Kidney (tissue), 22 donors: ENCODE measurements at regions of chr17 and their contacts with region 1.

Region 1: DNA sequence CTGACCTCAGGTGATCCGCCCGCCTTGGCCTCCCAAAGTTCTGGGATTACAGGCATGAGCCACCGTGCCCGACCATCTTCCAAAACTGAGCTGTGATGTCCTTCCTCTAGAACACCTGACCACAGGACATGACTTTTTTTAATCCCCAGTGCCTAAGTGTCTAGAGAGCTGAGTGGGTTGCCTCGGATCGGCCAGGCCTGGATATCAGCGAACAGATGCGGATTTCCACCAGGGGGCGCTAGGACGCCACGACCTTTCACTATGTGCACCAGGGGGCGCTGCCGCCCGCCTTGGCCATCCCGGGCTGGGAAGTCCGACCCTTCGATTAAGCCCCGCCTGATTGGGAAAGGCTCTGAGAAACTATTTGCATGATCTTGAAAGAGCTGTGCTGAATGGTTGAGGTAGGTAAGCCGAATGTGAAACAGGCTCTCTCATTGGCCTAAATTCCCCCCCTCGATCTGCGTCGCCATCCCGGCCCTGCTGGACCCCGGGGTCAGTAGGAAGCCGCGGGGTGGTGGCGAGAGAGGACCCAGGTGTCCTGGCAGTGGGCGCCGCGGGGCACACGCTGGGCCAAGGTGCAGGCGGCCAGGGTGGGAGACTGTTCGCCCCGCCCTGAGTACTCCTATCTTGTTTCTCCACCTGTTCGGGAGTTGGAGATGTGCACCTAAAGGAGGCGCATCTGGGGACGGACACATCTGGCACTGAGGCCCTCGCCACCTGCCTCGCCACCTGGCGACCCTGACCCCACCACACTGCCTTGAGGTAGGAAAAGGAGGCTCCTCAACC is at the start of gene ACBD4:
- DNase-seq: peak; percentile 96 to 99 (median 97)
- H3K4me3 ChIP-seq: peak within 1 kb of the TSS; percentile 68 to 92 (median 88)
- H3K27ac ChIP-seq: peak within 1 kb of the TSS; percentile 79 to 85
- H3K4me1 ChIP-seq: peaks cover 0 to 19% (median 6%) of the 10 kb centered on the region in 3 donors
- H3K27me3 ChIP-seq: no peaks in the 10 kb centered on the region
- CTCF ChIP-seq: peak; percentile 100
- total RNA-seq, gene ACBD4: 19.2 TPM

Region 2: GRCh38 chr17:44872131-44872768 is 263.1 kb before region 1 on chr17:
- intact Hi-C with region 1: no loop called
- DNase-seq: no peak
- H3K4me3 ChIP-seq: no peak overlapping the region
- H3K27ac ChIP-seq: no peak overlapping the region
- H3K4me1 ChIP-seq: no peaks in the 10 kb centered on the region
- H3K27me3 ChIP-seq: no peaks in the 10 kb centered on the region
- CTCF ChIP-seq: no peak

Region 3: GRCh38 chr17:45197555-45198334 is 62.4 kb after region 1 on chr17:
- intact Hi-C with region 1: loop called (anchors 10 kb)
- DNase-seq: peak; percentile 91 to 95 (median 94)
- H3K4me3 ChIP-seq: no peak overlapping the region
- H3K27ac ChIP-seq: no peak overlapping the region
- H3K4me1 ChIP-seq: no peaks in the 10 kb centered on the region
- H3K27me3 ChIP-seq: no peaks in the 10 kb centered on the region
- CTCF ChIP-seq: peak; percentile 98